ENCODE measurements at regions of chr3 and their contacts with region 1.

Region 1: GRCh38 chr3:56702490-56703315 is 19.6 kb upstream of the TASOR start:
- H3K4me3 ChIP-seq: no peak overlapping the region
- H3K27ac ChIP-seq: no peak overlapping the region
- H3K4me1 ChIP-seq: no peaks in the 10 kb centered on the region
- CTCF ChIP-seq: no peak

Region 2: GRCh38 chr3:56988458-56989168 is 285.9 kb after region 1 on chr3:
- CTCF ChIA-PET with region 1: interaction called, 97 read pairs
- POLR2A ChIA-PET with region 1: interaction called, 4 read pairs
- H3K4me3 ChIP-seq: no peak overlapping the region
- H3K27ac ChIP-seq: no peak overlapping the region
- H3K4me1 ChIP-seq: no peaks in the 10 kb centered on the region
- CTCF ChIP-seq: peak; percentile 75